Activated T-helper 1 cell treated with anti-CD3 and anti-CD28 coated beads, Interleukin-12 subunit alpha, Interleukin-12 subunit beta, Interleukin-2, Interleukin-4 antibody, amounts not matched to agents 30 ng/mL and 10 ng/mL and 1 ng/mL, durations not matched to agents 14 hours and 24 hours and 36 hours (primary cell): ENCODE measurements at regions of chr14 and their contacts with region 1.

Region 1: DNA sequence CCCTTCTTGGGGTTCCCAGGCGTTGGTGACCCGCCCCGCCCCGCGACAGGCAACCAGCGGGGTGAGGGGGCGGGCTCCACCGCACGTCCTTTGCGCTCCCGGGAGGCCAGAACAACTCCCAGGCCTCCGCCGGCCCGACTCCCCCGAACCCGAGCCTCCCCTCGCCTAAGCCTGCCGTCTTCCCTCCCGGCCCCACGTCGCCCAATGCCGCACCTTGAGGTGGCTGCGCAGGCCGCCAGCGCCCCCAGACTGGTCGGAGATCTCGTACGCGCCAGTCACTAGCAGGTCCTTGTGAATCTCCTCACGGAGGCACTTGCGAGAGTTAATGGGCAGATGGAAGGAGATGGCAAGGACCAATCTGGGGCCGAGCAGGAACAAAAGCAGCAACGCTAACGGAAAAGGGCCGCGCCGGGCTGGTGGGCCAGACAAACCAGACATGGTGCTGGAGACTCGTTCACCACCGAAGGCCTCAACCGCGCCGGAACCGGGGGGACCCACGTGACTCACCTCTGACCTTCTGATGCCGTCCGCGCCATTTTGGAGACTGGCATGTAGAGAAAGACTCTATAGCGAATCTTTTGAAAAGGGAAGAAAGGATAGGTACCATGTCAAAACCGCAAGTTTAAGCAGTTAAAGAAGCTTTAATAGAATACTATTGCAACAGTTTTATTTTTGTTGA is at the start of gene TMED10:
- DNase-seq: peak; percentile 87
- H3K4me3 Mint-ChIP-seq: peak within 1 kb of the TSS; percentile 89
- H3K27ac Mint-ChIP-seq: peak within 1 kb of the TSS; percentile 96
- H3K4me1 Mint-ChIP-seq: peaks cover 35% of the 10 kb centered on the region
- H3K27me3 Mint-ChIP-seq: peaks cover 7% of the 10 kb centered on the region
- total RNA-seq, gene TMED10: 195 and 204 TPM in 2 replicates

Region 2: DNA sequence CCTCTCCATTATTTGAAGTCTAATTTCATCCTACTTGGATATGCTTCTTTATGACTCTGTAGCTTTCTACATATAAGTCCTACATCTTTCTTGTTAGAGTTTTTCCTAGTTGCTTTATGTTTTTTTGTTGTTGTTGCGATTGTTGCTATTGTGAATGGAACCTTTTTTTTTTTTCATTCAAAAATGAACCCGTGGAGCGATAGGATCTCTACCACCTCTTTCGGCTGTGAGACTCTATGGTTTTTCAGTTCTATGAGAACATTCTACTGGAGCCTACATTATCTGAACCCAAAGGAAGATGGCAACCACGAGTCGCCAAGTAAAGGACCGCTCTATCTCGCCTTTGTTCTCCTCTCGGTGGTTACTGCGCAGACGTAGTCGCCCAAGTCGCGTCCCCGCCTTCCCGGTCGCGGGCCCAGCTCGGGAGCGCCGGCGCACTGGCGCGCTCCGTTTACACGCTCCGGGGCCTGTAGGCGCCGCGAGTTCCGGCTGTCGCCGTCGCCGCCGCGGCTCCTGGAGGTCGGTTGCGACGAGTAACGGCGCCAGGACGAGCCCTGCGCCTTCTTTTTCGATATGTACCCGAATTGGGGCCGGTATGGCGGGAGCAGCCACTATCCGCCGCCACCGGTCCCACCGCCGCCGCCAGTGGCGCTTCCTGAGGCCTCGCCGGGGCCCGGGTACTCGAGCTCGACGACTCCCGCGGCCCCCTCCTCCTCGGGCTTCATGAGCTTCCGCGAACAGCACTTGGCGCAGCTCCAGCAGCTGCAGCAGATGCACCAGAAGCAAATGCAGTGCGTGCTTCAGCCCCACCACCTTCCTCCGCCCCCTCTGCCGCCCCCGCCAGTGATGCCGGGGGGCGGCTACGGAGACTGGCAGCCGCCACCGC is 413.1 kb before region 1 on chr14 and contains the start of gene YLPM1:
- intact Hi-C with region 1: no loop called
- DNase-seq: peak; percentile 92
- H3K4me3 Mint-ChIP-seq: peak within 1 kb of the TSS; percentile 98
- H3K27ac Mint-ChIP-seq: peak within 1 kb of the TSS; percentile 97
- H3K4me1 Mint-ChIP-seq: peaks cover 43% of the 10 kb centered on the region
- H3K27me3 Mint-ChIP-seq: peaks cover 1% of the 10 kb centered on the region
- total RNA-seq, gene YLPM1: 70.4 and 73.7 TPM in 2 replicates

Region 3: DNA sequence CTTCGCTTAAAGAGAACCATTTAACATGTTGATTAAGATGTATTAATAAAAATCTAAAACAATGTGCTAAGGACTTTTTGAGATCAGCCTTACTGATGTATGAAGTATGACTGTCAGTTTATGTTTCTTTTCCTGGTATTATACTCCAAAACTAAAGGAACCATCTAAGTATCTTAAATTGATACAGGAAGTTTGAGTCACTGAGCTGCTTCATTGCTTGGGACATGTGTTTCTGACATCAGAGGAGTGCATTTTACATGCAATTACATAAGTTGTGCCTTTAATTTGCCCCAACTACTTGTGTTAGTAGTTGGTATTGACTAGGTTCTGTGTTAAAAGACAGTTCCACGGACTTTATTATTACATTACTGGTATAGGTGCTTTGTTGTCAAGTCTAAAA is 351.3 kb before region 1 on chr14:
- intact Hi-C with region 1: no loop called
- DNase-seq: no peak
- H3K4me3 Mint-ChIP-seq: no peak overlapping the region
- H3K27ac Mint-ChIP-seq: no peak overlapping the region
- H3K4me1 Mint-ChIP-seq: no peaks in the 10 kb centered on the region
- H3K27me3 Mint-ChIP-seq: no peaks in the 10 kb centered on the region

Region 4: GRCh38 chr14:74881431-74882361 is 294.6 kb before region 1 on chr14 and contains the start of gene DLST:
- intact Hi-C with region 1: loop called (anchors 1 kb)
- DNase-seq: peak; percentile 84
- H3K4me3 Mint-ChIP-seq: peak within 1 kb of the TSS; percentile 100
- H3K27ac Mint-ChIP-seq: peak within 1 kb of the TSS; percentile 99
- H3K4me1 Mint-ChIP-seq: peaks cover 52% of the 10 kb centered on the region
- H3K27me3 Mint-ChIP-seq: no peaks in the 10 kb centered on the region
- total RNA-seq, gene DLST: 98.9 and 107 TPM in 2 replicates

Region 5: DNA sequence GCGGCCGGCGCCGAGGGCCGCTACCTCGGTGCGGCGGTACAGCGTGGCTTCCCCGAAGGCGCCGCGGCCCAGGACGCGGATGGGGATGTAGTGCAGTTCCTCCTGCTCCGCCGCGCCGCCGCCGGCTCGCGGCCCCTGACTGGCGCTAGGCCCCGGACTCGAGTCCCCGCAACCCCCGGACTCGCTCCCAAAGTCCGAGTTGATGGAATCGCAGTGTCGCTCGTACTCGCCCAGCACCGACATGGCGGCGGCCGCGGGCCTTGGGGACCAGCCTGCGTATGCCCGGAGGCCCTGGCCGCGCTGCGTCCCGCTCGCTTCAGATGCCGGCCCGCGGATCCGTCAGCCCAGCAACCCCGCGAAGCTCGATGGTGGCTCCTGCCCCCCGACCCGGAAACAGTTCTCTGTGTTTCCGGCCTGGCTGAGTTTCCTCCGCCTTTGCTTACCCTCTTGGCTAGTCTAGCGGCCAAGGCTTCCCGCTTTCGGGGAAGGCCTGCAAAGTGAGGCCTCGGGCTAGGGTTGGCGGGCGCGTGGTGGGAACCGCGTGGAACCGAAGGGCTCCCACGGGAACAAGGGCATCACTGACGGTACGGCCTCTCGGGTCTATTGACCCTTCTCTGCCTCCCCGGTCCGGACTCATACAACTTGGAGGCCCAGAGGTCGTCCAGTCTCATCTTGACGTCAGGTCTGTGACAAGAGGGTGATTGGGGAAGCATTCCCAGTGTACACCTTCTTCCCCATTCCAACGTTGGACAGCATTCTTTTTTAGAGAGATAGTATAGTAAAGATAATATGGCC is 49.4 kb before region 1 on chr14 and contains the start of gene NEK9:
- intact Hi-C with region 1: loop called (anchors 1 kb)
- DNase-seq: peak; percentile 86
- H3K4me3 Mint-ChIP-seq: peak within 1 kb of the TSS; percentile 93
- H3K27ac Mint-ChIP-seq: peak within 1 kb of the TSS; percentile 97
- H3K4me1 Mint-ChIP-seq: peaks cover 39% of the 10 kb centered on the region
- H3K27me3 Mint-ChIP-seq: no peaks in the 10 kb centered on the region
- total RNA-seq, gene NEK9: 76.8 and 77.0 TPM in 2 replicates

Region 6: GRCh38 chr14:75158843-75159614 is 17.3 kb before region 1 on chr14:
- intact Hi-C with region 1: loop called (anchors 1 kb)
- DNase-seq: no peak
- H3K4me3 Mint-ChIP-seq: no peak overlapping the region
- H3K27ac Mint-ChIP-seq: no peak overlapping the region
- H3K4me1 Mint-ChIP-seq: peaks cover 47% of the 10 kb centered on the region
- H3K27me3 Mint-ChIP-seq: no peaks in the 10 kb centered on the region

Region 7: DNA sequence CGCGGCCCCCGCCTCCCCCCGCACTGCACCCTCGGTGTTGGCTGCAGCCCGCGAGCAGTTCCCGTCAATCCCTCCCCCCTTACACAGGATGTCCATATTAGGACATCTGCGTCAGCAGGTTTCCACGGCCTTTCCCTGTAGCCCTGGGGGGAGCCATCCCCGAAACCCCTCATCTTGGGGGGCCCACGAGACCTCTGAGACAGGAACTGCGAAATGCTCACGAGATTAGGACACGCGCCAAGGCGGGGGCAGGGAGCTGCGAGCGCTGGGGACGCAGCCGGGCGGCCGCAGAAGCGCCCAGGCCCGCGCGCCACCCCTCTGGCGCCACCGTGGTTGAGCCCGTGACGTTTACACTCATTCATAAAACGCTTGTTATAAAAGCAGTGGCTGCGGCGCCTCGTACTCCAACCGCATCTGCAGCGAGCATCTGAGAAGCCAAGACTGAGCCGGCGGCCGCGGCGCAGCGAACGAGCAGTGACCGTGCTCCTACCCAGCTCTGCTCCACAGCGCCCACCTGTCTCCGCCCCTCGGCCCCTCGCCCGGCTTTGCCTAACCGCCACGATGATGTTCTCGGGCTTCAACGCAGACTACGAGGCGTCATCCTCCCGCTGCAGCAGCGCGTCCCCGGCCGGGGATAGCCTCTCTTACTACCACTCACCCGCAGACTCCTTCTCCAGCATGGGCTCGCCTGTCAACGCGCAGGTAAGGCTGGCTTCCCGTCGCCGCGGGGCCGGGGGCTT is 102.3 kb after region 1 on chr14 and contains the start of gene FOS:
- intact Hi-C with region 1: loop called (anchors 1 kb)
- DNase-seq: peak; percentile 87
- H3K4me3 Mint-ChIP-seq: peak within 1 kb of the TSS; percentile 90
- H3K27ac Mint-ChIP-seq: peak within 1 kb of the TSS; percentile 99
- H3K4me1 Mint-ChIP-seq: peaks cover 52% of the 10 kb centered on the region
- H3K27me3 Mint-ChIP-seq: peaks cover 55% of the 10 kb centered on the region
- total RNA-seq, gene FOS: 40.9 and 41.9 TPM in 2 replicates

Region 8: DNA sequence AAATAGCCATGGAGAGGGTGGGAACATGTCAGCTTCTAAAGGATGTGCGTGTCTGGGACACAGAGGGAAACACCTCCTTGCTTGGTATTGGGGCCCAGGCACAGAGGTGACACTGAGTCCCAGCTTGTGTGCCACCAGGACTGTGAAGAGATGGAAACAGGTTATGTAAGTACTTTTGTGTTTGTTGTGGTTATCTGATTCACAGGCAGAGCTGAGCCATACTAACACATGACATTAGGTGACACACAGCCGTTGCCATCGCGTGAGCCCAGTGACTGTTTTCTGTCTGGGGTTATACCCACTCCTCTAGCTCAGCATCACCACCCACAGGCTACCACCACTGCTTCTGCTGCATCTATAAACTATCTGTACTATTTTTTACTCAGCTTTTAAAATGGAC is 390.0 kb after region 1 on chr14:
- intact Hi-C with region 1: loop called (anchors 2 kb)
- DNase-seq: peak; percentile 68
- H3K4me3 Mint-ChIP-seq: peak overlapping the region; percentile 66
- H3K27ac Mint-ChIP-seq: peak overlapping the region; percentile 87
- H3K4me1 Mint-ChIP-seq: peaks cover 76% of the 10 kb centered on the region
- H3K27me3 Mint-ChIP-seq: no peaks in the 10 kb centered on the region